ENCODE measurements at regions of chr5 and their contacts with region 1.

Region 1: GRCh38 chr5:148957591-148958202 is 105.2 kb downstream of the SH3TC2 start:
- DNase-seq: peak; percentile 74
- ATAC-seq: no peak; the same call in 1 of the 2 replicates
- H3K4me3 Mint-ChIP-seq: no peak overlapping the region
- H3K27ac Mint-ChIP-seq: no peak overlapping the region
- H3K4me1 Mint-ChIP-seq: peaks cover 23% of the 10 kb centered on the region
- H3K27me3 Mint-ChIP-seq: peaks cover 8% of the 10 kb centered on the region
- CTCF ChIP-seq: peak; percentile 85

Region 2: GRCh38 chr5:148748702-148749392 is 208.8 kb before region 1 on chr5:
- CTCF ChIA-PET with region 1: interaction called, 10 read pairs
- POLR2A ChIA-PET with region 1: no interaction called
- DNase-seq: no peak
- ATAC-seq: no peak
- H3K4me3 Mint-ChIP-seq: no peak overlapping the region
- H3K27ac Mint-ChIP-seq: no peak overlapping the region
- H3K4me1 Mint-ChIP-seq: peaks cover 10% of the 10 kb centered on the region
- H3K27me3 Mint-ChIP-seq: peaks cover 2% of the 10 kb centered on the region; the same call in 1 of the 2 replicates
- CTCF ChIP-seq: no peak

Region 3: DNA sequence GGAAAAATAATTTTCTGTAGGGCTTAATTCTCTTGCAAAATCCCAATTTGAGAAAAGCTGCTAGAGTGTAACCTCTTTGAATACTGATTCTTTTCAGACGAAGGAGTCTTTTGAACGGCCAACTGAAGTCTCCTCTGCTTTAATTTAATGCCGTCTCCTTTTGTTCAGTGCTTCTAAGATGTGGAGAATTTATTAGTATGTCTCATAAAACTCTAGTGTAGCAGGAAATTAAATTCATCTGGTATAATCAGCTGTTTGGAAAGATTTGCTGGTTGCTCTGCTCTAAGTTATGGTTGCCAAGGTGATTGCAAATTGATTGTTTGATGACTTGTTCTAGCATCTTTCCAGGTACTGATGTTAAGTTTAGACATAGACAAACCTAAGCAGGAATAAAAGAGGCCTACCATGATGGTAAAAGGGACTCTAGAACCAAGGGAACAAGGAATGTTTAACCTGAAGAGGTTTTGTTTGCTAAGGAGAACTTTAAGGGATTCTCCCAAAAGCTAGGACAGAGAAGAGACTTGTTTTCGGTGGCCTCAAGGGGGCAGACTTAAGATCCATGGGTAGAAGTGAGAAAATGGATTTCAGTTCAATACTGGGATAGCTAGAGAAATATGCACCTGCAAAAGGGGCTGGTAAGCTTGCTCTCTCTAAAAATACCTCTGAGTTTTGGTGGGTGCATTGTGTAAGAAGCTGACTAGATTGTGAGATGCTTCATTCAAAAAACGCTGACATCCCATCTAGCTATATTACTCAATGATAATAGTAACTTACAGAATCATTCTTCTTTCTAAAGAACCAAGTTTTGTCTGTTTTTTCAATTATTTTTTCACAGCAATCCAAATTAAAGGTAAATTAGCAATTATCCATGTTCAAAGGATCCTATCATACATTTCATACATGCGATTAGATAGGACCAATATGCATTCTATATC is 137.0 kb before region 1 on chr5:
- CTCF ChIA-PET with region 1: interaction called, 63 read pairs
- POLR2A ChIA-PET with region 1: no interaction called
- DNase-seq: no peak
- ATAC-seq: peak; percentile 66
- H3K4me3 Mint-ChIP-seq: no peak overlapping the region
- H3K27ac Mint-ChIP-seq: no peak overlapping the region
- H3K4me1 Mint-ChIP-seq: peaks cover 29% of the 10 kb centered on the region
- H3K27me3 Mint-ChIP-seq: peaks cover 14% of the 10 kb centered on the region
- CTCF ChIP-seq: no peak

Region 4: GRCh38 chr5:148831590-148832565 is 125.8 kb before region 1 on chr5:
- CTCF ChIA-PET with region 1: interaction called, 12 read pairs
- POLR2A ChIA-PET with region 1: no interaction called
- DNase-seq: no peak
- ATAC-seq: no peak
- H3K4me3 Mint-ChIP-seq: no peak overlapping the region
- H3K27ac Mint-ChIP-seq: no peak overlapping the region
- H3K4me1 Mint-ChIP-seq: peaks cover 41% of the 10 kb centered on the region
- H3K27me3 Mint-ChIP-seq: peaks cover 24% of the 10 kb centered on the region
- CTCF ChIP-seq: no peak

Region 5: GRCh38 chr5:148912714-148913398 is 44.8 kb before region 1 on chr5:
- CTCF ChIA-PET with region 1: interaction called, 144 read pairs
- POLR2A ChIA-PET with region 1: interaction called, 6 read pairs
- DNase-seq: peak; percentile 55
- ATAC-seq: peak; percentile 84
- H3K4me3 Mint-ChIP-seq: no peak overlapping the region
- H3K27ac Mint-ChIP-seq: peak overlapping the region; percentile 93
- H3K4me1 Mint-ChIP-seq: peaks cover 30% of the 10 kb centered on the region
- H3K27me3 Mint-ChIP-seq: no peaks in the 10 kb centered on the region
- CTCF ChIP-seq: 0 out of 2 replicates have a peak, but pooled peaks have one; percentile 0

Region 6: DNA sequence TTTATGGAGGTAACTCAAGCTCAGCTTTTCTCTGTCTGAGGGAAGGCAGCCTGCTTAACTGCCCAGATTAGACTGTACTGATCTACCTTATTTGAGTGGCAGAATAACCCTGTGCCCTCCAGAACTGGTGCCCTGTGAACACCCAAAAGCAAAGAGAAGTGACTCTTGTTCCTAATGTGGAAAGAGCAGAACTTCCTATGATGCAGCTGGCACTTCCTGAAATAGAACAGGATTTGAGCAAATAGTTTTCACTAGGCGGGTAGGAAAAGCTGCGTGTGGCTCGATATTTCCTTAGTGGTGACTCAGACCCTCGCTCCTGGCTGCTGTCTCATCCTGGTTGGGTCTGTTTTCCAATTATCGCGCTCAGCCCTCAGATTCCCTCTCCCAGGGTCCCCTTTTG is 15.3 kb after region 1 on chr5:
- CTCF ChIA-PET with region 1: interaction called, 74 read pairs
- POLR2A ChIA-PET with region 1: no interaction called
- DNase-seq: no peak
- ATAC-seq: no peak
- H3K4me3 Mint-ChIP-seq: no peak overlapping the region
- H3K27ac Mint-ChIP-seq: no peak overlapping the region
- H3K4me1 Mint-ChIP-seq: peaks cover 33% of the 10 kb centered on the region
- H3K27me3 Mint-ChIP-seq: no peaks in the 10 kb centered on the region
- CTCF ChIP-seq: no peak

Region 7: GRCh38 chr5:149035372-149035790 is 77.7 kb after region 1 on chr5:
- CTCF ChIA-PET with region 1: interaction called, 39 read pairs
- POLR2A ChIA-PET with region 1: no interaction called
- DNase-seq: peak; percentile 81
- ATAC-seq: peak; percentile 93
- H3K4me3 Mint-ChIP-seq: no peak overlapping the region
- H3K27ac Mint-ChIP-seq: no peak overlapping the region
- H3K4me1 Mint-ChIP-seq: no peaks in the 10 kb centered on the region
- H3K27me3 Mint-ChIP-seq: no peaks in the 10 kb centered on the region; the same call in 1 of the 2 replicates
- CTCF ChIP-seq: peak; percentile 64

Region 8: GRCh38 chr5:149099920-149100319 is 142.2 kb after region 1 on chr5:
- CTCF ChIA-PET with region 1: no interaction called
- POLR2A ChIA-PET with region 1: no interaction called
- DNase-seq: no peak
- ATAC-seq: no peak
- H3K4me3 Mint-ChIP-seq: no peak overlapping the region
- H3K27ac Mint-ChIP-seq: no peak overlapping the region
- H3K4me1 Mint-ChIP-seq: no peaks in the 10 kb centered on the region
- H3K27me3 Mint-ChIP-seq: peaks cover 13% of the 10 kb centered on the region; the same call in 1 of the 2 replicates
- CTCF ChIP-seq: no peak